Activated CD4-positive, alpha-beta memory T cell treated with anti-CD3 and anti-CD28 coated beads for 36 hours (primary cell): ENCODE measurements at regions of chr5 and their contacts with region 1.

Region 1: DNA sequence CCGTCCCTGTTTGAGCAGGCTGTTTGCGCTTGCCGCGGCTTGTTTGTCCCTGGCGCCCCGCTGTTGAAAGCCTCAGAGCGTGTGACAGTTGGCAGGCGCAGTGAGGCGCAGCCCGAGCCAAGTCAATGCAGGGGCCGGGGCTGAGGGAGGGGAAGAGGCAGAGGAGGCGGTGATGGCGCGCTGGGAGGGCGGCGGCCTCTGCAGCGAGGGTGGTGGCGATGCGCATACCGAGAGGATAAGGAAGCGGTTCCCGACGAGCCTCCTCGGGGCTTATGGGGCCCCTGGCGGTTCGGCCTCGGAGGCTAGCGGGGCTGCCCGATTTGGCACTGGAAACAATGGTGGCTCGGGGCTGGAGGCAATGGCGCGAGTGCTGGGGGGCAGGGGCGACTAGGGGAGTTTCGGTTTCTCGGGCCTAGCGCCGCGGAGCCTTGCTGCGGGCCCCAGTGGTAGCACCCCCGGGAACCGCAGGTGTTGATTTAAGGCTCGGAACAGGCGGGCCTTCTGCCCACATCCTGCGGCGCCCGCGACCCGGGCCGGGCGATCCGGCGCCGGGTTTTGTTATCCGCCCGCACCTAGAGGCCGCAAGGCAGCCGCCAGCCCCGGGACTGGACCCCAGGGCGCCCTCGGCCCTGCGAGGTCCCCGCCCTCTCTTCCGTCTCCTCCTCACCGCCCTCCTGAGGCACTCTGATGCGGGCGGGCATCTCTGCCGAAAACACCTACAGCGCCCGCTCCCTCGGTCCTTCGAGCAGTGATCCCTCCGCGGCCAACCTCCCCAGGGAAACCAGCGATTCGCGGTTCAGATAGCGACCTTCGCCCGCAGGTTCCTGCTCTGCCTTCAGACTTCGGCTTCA is 947 bp upstream of the LNPEP start:
- DNase-seq: peak; percentile 96
- H3K4me3 Mint-ChIP-seq: peak overlapping the region; percentile 90
- H3K27ac Mint-ChIP-seq: peak overlapping the region; percentile 98
- H3K4me1 Mint-ChIP-seq: peaks cover 58% of the 10 kb centered on the region
- H3K27me3 Mint-ChIP-seq: no peaks in the 10 kb centered on the region

Region 2: DNA sequence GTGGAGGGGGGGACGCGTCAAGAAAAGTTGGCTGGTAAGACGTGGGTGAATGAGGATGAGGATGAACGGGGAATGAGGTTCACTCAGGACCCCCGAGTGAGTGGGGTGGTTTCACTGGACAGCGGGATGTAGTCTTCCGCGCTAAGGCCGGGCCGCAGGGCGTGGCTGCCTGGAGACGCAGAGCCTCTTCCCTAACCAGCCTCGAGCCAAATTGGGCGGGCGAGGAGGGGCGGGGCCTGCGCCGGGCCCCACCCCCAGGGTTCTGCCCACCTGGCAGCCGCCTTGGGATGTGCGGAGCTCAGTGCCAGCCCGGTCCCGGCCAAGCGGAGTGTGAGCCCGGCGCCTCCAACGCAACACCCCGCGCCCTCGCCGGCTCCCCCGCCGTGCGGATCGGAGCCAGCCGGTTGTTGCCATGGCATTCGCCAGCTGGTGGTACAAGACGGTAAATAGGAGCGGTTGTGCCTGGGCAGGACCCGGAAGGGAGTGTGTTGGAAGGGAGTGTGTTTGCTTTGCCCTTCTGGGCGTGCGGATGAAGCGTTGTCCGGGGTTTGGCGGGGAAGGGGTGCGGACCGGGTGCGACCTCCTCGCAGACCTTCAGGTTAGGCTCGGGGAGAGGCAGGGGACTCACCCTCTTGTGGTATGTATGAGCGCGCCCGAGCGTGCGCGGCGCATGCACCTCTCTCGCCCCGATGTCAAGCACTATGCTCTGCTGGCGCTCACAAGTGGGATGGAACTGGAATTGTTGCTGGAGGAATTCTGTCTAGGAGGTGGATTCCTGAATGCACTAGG is 272.0 kb before region 1 on chr5:
- CTCF ChIA-PET with region 1: no interaction called
- POLR2A ChIA-PET with region 1: no interaction called
- intact Hi-C with region 1: loop called (anchors 1 kb)
- DNase-seq: peak; percentile 94
- H3K4me3 Mint-ChIP-seq: peak overlapping the region; percentile 99
- H3K27ac Mint-ChIP-seq: peak overlapping the region; percentile 98
- H3K4me1 Mint-ChIP-seq: peaks cover 45% of the 10 kb centered on the region
- H3K27me3 Mint-ChIP-seq: peaks cover 14% of the 10 kb centered on the region

Region 3: GRCh38 chr5:96807075-96807654 is 127.8 kb before region 1 on chr5:
- CTCF ChIA-PET with region 1: interaction called, 3 read pairs
- POLR2A ChIA-PET with region 1: interaction called, 13 read pairs
- intact Hi-C with region 1: loop called (anchors 1 kb)
- DNase-seq: peak; percentile 59
- H3K4me3 Mint-ChIP-seq: peak overlapping the region; percentile 94
- H3K27ac Mint-ChIP-seq: peak overlapping the region; percentile 98
- H3K4me1 Mint-ChIP-seq: peaks cover 72% of the 10 kb centered on the region
- H3K27me3 Mint-ChIP-seq: no peaks in the 10 kb centered on the region

Region 4: GRCh38 chr5:96876292-96876850 is 58.6 kb before region 1 on chr5 and contains the start of gene ERAP2:
- CTCF ChIA-PET with region 1: interaction called, 6 read pairs
- POLR2A ChIA-PET with region 1: interaction called, 8 read pairs
- intact Hi-C with region 1: loop called (anchors 1 kb)
- DNase-seq: peak; percentile 30
- H3K4me3 Mint-ChIP-seq: peak within 1 kb of the TSS; percentile 96
- H3K27ac Mint-ChIP-seq: peak within 1 kb of the TSS; percentile 97
- H3K4me1 Mint-ChIP-seq: peaks cover 63% of the 10 kb centered on the region
- H3K27me3 Mint-ChIP-seq: no peaks in the 10 kb centered on the region
- total RNA-seq, gene ERAP2: 44.8 to 48.9 TPM

Region 5: DNA sequence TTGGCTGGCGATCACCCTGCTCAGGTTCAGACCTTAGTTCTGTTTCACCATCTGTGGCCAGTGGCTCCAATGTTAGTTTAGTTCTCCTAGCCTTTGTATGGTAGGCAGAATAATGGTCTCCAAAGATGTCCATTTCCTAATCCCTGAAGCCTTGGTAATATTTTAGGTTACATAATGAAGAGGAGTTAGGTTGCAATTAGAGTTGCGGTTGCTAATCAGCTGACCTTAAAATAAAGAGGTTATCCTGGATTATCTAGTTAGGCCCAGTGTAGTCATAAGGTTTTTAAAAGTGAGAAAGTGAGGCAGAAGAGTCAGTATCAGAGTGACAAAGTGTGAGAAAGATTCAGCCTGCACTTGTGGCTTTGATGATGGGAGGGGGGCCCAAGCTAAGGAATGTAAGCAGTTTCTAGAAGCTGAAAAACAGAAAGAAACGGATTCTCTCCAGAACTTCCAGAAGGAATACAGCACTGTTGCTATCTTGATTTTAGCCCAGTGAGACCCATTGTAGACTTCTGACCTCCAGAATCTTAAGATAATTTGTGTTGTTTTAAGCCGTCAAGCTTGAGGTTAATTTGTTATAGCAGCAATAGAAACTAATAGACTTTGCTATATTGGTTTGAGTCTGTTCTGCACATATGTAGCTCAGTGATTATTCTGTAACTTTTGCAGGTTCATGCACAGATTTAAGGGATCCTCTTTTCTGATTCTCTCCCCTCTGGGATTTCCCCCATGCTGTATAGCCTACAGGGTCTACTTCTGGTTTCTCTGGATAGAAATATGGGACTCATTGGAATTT is 22.5 kb after region 1 on chr5:
- CTCF ChIA-PET with region 1: interaction called, 4 read pairs
- POLR2A ChIA-PET with region 1: interaction called, 9 read pairs
- intact Hi-C with region 1: loop called (anchors 1 kb)
- DNase-seq: peak; percentile 72
- H3K4me3 Mint-ChIP-seq: peak overlapping the region; percentile 61
- H3K27ac Mint-ChIP-seq: peak overlapping the region; percentile 74
- H3K4me1 Mint-ChIP-seq: peaks cover 79% of the 10 kb centered on the region
- H3K27me3 Mint-ChIP-seq: no peaks in the 10 kb centered on the region

Region 6: GRCh38 chr5:97162045-97162444 is 227.1 kb after region 1 on chr5:
- CTCF ChIA-PET with region 1: interaction called, 10 read pairs
- POLR2A ChIA-PET with region 1: no interaction called
- intact Hi-C with region 1: loop called (anchors 2 kb)
- DNase-seq: peak; percentile 64
- H3K4me3 Mint-ChIP-seq: no peak overlapping the region
- H3K27ac Mint-ChIP-seq: no peak overlapping the region
- H3K4me1 Mint-ChIP-seq: peaks cover 17% of the 10 kb centered on the region
- H3K27me3 Mint-ChIP-seq: no peaks in the 10 kb centered on the region

Region 7: GRCh38 chr5:98414938-98415337 is 1480.0 kb after region 1 on chr5:
- CTCF ChIA-PET with region 1: no interaction called
- POLR2A ChIA-PET with region 1: no interaction called
- intact Hi-C with region 1: no loop called
- DNase-seq: no peak
- H3K4me3 Mint-ChIP-seq: no peak overlapping the region
- H3K27ac Mint-ChIP-seq: no peak overlapping the region
- H3K4me1 Mint-ChIP-seq: no peaks in the 10 kb centered on the region
- H3K27me3 Mint-ChIP-seq: peaks cover 3% of the 10 kb centered on the region